Prostate gland (tissue), 2 donors: ENCODE measurements at regions of chr7 and their contacts with region 1.

Region 1: DNA sequence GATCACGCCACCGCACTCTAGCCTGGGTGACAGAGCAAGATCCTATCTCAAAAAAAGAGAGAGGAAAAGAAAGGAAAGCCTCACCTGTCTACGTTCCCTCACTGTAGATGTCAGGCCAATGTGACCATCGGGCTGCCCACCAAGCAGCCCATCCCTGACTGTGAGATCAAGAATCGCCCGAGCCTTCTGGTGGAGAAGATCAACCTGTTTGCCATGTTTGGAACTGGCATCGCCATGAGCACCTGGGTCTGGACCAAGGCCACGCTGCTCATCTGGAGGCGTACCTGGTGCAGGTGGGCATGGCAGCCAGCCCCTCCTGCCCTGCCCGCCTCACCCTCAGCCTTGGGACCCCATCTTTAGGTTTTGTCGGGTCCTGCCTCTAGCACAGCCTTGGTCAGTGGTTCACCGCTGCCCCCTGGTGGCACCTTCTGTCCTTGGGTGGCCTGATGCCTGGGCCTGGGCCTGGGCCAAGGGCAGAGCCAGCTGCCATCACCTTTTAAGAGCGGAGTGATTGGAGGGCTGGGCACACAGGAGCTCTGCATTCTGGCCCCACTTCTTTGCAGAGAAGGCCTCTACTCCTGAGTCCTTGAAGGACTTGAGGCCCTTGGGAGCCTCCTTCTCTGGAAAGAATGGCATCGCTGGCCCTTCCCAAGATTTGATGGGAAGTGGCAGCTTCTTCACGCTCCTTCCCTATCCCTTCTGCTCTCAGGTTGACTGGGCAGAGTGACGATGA is 14.4 kb upstream of the AHCYL2 start:
- DNase-seq: peak; percentile 65
- H3K4me3 ChIP-seq: no peak overlapping the region
- H3K27ac ChIP-seq: no peak overlapping the region
- H3K4me1 ChIP-seq: no peaks in the 10 kb centered on the region
- H3K27me3 ChIP-seq: no peaks in the 10 kb centered on the region
- CTCF ChIP-seq: peak; percentile 52 to 94 (median 82)
- POLR2A ChIP-seq: no peak

Region 2: DNA sequence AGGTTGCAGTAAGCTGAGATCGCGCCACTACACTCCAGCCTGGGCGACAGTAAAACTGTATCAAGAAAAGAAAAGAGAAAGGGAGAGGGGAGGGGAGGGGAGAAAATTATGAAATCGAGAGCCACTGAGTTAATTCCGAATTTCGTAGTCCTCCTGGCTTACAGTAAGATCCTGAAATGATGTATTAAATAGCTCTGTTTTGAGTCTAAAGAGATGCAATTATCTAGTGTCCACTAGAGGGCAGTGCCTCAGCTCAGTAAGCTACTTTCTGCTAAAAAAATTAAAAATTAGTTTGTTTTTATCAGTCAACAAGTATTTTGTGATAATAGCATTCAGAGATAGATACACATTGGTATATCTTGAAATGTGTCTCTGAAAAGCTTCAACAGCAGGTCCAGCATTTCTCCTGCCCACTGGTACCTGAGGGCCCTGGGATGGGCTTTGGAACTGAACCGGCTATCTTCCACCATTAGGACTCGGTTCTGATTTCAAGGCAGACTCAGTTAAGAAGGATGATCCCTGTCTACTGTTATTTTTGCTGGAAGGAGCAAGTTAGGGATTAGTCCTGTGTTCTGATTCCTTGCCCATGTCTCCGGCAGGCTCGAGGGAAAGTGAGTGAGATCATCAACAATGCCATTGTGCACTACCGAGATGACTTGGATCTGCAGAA is 46.4 kb before region 1 on chr7:
- intact Hi-C with region 1: loop called (anchors 2 kb)
- DNase-seq: no peak
- H3K4me3 ChIP-seq: no peak overlapping the region
- H3K27ac ChIP-seq: no peak overlapping the region
- H3K4me1 ChIP-seq: no peaks in the 10 kb centered on the region
- H3K27me3 ChIP-seq: no peaks in the 10 kb centered on the region
- CTCF ChIP-seq: peak; percentile 76 to 83 (median 80)
- POLR2A ChIP-seq: no peak

Region 3: DNA sequence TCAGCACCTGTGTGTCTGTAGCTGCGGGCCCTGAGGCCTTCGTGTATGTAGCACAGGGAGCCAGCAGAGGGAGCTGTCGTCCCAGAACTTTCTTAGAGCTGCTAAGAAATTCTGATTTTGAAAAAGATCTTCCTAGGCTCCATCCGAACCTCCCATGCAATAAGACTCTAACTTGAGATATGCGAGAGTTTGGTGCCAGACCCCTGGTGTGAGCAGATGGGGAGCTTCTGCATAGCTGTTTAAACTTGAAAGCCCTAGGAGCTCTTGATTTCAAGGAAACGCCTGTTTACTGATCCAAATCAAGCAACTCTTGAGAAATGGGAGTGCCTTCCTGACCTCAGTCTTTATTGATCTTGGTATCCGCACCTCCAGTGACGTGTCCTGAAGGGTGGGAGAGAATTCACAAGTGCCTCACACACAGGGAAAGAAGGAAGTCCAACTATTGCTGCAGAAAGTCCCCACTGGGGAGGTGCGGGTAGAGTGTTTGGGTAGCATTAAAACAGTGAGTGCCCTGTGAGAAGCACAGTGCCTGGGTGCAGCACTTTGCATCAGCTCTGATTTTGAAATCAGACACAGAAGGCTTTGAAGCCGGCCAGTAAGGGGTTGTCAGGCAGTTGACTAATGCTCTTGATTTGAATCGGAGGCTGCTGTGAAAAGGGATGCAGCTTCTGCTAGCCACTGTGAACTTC is 157.4 kb after region 1 on chr7:
- intact Hi-C with region 1: no loop called
- DNase-seq: peak; percentile 65
- H3K4me3 ChIP-seq: no peak overlapping the region
- H3K27ac ChIP-seq: no peak overlapping the region
- H3K4me1 ChIP-seq: no peaks in the 10 kb centered on the region
- H3K27me3 ChIP-seq: no peaks in the 10 kb centered on the region
- CTCF ChIP-seq: peak; percentile 37 to 81 (median 76)
- POLR2A ChIP-seq: peak; percentile 59